ENCODE measurements at regions of chr10 and their contacts with region 1.

Region 1: DNA sequence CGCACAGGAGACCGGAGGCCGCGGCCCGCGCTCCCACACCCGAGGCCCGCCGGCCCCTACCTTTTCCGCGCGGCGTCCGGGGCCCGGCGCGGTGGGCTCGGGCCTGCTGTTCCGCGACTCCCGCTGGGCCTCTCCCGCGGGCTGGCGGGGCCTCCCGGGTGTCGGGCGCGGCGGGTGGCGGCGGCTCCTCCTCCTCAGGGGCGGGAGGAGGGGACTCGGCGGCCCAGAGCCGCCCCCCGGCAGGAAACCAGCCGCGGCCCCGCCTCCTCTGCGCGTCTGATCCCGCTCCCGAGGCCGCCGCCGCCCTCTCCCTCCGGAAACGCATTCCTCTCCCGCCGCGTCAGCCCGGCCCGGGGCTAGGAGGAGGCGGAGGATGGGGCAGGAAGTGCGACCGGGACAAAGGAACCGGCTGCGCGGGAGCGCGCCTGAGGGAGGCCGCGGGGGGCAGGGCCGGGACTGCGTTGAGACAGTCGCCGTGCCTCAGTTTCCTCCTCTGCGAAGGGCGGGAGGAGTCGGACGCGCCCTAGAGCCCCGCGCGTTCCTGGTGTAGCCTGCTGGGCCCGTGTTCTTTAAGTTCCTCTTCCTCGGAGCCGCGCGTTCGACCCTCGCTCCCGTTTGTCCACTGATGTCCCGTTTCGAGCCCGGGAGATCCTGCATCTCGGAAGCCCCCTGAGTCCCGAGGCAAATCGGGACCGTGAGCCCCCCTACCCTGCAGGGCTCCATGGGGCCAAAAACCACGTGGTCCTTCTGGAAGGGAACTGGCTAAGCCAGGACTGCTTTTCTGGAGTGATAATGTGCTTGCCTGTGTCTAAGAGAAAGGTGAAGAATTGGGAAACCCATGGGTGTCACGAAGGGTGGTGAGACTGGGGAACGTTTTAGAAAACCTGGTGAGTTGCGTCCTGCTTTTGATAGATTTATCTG is at the start of gene ITGB1:
- DNase-seq: peak; percentile 65 to 91 (median 82)
- ATAC-seq: peak; percentile 93
- H3K4me3 ChIP-seq: peak within 1 kb of the TSS; percentile 82 to 91
- H3K4me3 Mint-ChIP-seq: peak within 1 kb of the TSS; percentile 87
- H3K27ac ChIP-seq: peak within 1 kb of the TSS; percentile 49 to 77
- H3K27ac Mint-ChIP-seq: peak within 1 kb of the TSS; percentile 74
- H3K4me1 ChIP-seq: peaks cover 27% of the 10 kb centered on the region
- H3K4me1 Mint-ChIP-seq: peaks cover 54% of the 10 kb centered on the region
- H3K27me3 ChIP-seq: no peaks in the 10 kb centered on the region
- H3K27me3 Mint-ChIP-seq: no peaks in the 10 kb centered on the region
- CTCF ChIP-seq: no peak
- total RNA-seq, gene ITGB1: 34.2 to 34.5 TPM

Region 2: GRCh38 chr10:31759799-31760626 is 1198.3 kb before region 1 on chr10:
- CTCF ChIA-PET with region 1: no interaction called
- POLR2A ChIA-PET with region 1: no interaction called
- intact Hi-C with region 1: loop called (anchors 5 to 10 kb)
- DNase-seq: peak; percentile 90 to 98 (median 94)
- ATAC-seq: peak; percentile 93
- H3K4me3 ChIP-seq: peak overlapping the region; percentile 98 to 99
- H3K4me3 Mint-ChIP-seq: peak overlapping the region; percentile 88
- H3K27ac ChIP-seq: peak overlapping the region; percentile 92 to 95
- H3K27ac Mint-ChIP-seq: peak overlapping the region; percentile 97
- H3K4me1 ChIP-seq: peaks cover 8% of the 10 kb centered on the region
- H3K4me1 Mint-ChIP-seq: peaks cover 14% of the 10 kb centered on the region
- H3K27me3 ChIP-seq: no peaks in the 10 kb centered on the region
- H3K27me3 Mint-ChIP-seq: no peaks in the 10 kb centered on the region
- CTCF ChIP-seq: no peak

Region 3: DNA sequence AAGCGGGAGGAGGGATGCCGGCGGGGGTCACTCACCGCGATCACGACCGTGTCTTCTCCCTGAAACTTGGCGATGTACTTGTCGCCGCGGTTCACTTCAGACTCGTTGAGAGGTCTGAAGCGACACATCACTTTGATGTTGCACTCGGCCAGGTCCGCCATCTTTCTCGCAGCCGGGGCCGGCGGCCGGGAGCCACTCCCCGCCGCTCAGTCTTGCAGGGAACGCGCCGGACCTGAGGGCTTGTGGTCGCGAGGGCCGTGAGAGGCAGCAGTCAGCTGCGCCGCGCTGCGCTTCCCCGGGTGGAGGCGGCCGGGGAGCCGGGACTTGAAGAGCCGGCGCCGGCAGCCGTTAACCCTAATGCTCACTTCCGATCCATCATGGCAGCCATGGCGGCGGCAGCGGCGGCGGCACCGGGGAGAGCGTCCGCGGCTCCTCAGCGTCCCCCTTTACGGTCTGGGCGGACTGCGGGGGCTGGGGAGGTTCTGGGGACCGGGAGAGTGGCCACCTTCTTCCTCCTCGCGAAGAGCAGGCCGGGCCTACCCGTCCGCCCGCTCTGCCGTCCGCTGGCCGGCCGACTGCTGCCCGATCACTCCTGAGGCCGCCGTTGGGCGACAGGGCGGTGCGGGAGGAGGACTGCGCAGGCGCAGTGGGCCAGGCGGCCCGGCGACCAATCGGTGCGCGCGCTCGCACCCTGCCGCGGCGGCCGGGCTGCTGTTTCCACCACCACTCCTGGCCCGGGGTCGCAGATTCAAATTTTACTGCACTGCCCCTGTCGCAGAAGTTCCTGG is 902.3 kb before region 1 on chr10 and contains the start of gene KIF5B:
- CTCF ChIA-PET with region 1: no interaction called
- POLR2A ChIA-PET with region 1: no interaction called
- intact Hi-C with region 1: loop called in 1 of 2 experiments (anchors 10 kb)
- DNase-seq: peak; percentile 69 to 93 (median 84)
- ATAC-seq: peak; percentile 79
- H3K4me3 ChIP-seq: peak within 1 kb of the TSS; percentile 74 to 89
- H3K4me3 Mint-ChIP-seq: peak within 1 kb of the TSS; percentile 96
- H3K27ac ChIP-seq: peak within 1 kb of the TSS; percentile 66 to 89
- H3K27ac Mint-ChIP-seq: peak within 1 kb of the TSS; percentile 94
- H3K4me1 ChIP-seq: peaks cover 41% of the 10 kb centered on the region
- H3K4me1 Mint-ChIP-seq: peaks cover 51% of the 10 kb centered on the region
- H3K27me3 ChIP-seq: no peaks in the 10 kb centered on the region
- H3K27me3 Mint-ChIP-seq: no peaks in the 10 kb centered on the region
- CTCF ChIP-seq: no peak
- total RNA-seq, gene KIF5B: 53.2 to 53.8 TPM

Region 4: GRCh38 chr10:32068569-32068968 is 889.8 kb before region 1 on chr10:
- CTCF ChIA-PET with region 1: no interaction called
- POLR2A ChIA-PET with region 1: no interaction called
- intact Hi-C with region 1: no loop called
- DNase-seq: no peak
- ATAC-seq: no peak
- H3K4me3 ChIP-seq: no peak overlapping the region
- H3K4me3 Mint-ChIP-seq: no peak overlapping the region
- H3K27ac ChIP-seq: no peak overlapping the region
- H3K27ac Mint-ChIP-seq: no peak overlapping the region
- H3K4me1 ChIP-seq: no peaks in the 10 kb centered on the region
- H3K4me1 Mint-ChIP-seq: no peaks in the 10 kb centered on the region
- H3K27me3 ChIP-seq: no peaks in the 10 kb centered on the region
- H3K27me3 Mint-ChIP-seq: no peaks in the 10 kb centered on the region
- CTCF ChIP-seq: no peak

Region 5: DNA sequence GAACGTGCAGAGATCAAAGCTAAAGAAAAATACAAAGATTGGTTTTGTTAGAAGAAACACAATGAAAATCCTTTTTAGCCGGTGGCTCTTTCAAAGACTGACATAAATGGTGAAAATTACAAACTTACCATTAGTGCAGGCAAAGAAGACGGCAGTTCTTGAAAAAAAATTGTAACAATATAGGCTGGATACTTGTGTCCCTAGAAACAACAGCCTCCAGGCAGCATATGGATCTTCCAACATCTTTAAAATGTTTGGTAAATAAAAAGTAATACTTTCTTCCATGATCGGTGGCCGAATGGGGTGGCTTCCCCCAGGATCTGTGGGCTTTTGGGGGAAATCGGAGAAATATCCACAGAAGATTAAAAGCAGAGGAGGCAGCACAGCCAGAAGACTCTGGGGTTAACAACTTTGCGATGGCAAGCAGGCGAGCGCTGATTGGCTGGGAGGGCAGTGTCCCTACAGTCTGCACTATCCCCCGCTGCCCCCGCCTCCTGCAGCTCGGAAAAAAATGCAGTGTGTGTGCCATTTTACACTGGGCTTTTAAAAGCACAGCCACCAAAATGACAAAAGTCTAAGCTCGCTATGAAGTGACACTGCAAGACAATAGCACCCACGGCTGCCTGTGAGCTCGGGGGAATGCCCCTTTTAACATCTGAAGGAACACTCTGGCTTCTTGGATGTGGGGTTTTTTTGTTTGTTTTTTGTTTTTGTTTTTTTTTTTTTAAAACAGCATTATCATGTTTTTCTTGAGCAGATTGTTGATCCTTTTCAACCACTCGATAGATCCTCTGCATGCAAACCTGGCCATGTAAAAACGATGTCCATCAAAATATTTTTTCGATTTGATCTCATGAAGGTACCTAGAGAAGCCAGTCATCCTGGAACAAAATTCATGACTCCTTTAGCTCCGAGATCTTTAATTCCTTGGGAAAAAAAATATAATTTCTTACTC is 579.7 kb before region 1 on chr10:
- CTCF ChIA-PET with region 1: no interaction called
- POLR2A ChIA-PET with region 1: interaction called, 4 read pairs
- intact Hi-C with region 1: loop called (anchors 2 to 10 kb)
- DNase-seq: peak; percentile 86 to 96 (median 93)
- ATAC-seq: peak; percentile 88
- H3K4me3 ChIP-seq: peak overlapping the region; percentile 72 to 84
- H3K4me3 Mint-ChIP-seq: no peak overlapping the region
- H3K27ac ChIP-seq: peak overlapping the region; percentile 68 to 72
- H3K27ac Mint-ChIP-seq: no peak overlapping the region
- H3K4me1 ChIP-seq: peaks cover 19% of the 10 kb centered on the region
- H3K4me1 Mint-ChIP-seq: peaks cover 26% of the 10 kb centered on the region
- H3K27me3 ChIP-seq: no peaks in the 10 kb centered on the region
- H3K27me3 Mint-ChIP-seq: no peaks in the 10 kb centered on the region
- CTCF ChIP-seq: no peak

Region 6: GRCh38 chr10:32923849-32924248 is 34.5 kb before region 1 on chr10:
- CTCF ChIA-PET with region 1: no interaction called
- POLR2A ChIA-PET with region 1: no interaction called
- intact Hi-C with region 1: loop called in 1 of 2 experiments (anchors 5 kb)
- DNase-seq: no peak
- ATAC-seq: no peak
- H3K4me3 ChIP-seq: no peak overlapping the region
- H3K4me3 Mint-ChIP-seq: no peak overlapping the region
- H3K27ac ChIP-seq: no peak overlapping the region
- H3K27ac Mint-ChIP-seq: no peak overlapping the region
- H3K4me1 ChIP-seq: no peaks in the 10 kb centered on the region
- H3K4me1 Mint-ChIP-seq: peaks cover 9% of the 10 kb centered on the region
- H3K27me3 ChIP-seq: no peaks in the 10 kb centered on the region
- H3K27me3 Mint-ChIP-seq: no peaks in the 10 kb centered on the region
- CTCF ChIP-seq: no peak

Region 7: GRCh38 chr10:33008499-33009243 is 50.3 kb after region 1 on chr10:
- CTCF ChIA-PET with region 1: interaction called, 7 read pairs
- POLR2A ChIA-PET with region 1: no interaction called
- intact Hi-C with region 1: loop called in 1 of 2 experiments (anchors 2 kb)
- DNase-seq: peak in 8 of 9 experiments; percentile 44 to 82 (median 65)
- ATAC-seq: peak; percentile 59
- H3K4me3 ChIP-seq: peak overlapping the region; percentile 34 to 36
- H3K4me3 Mint-ChIP-seq: peak overlapping the region; percentile 68
- H3K27ac ChIP-seq: peak overlapping the region in 1 of 2 experiments; percentile 47
- H3K27ac Mint-ChIP-seq: peak overlapping the region; percentile 49
- H3K4me1 ChIP-seq: peaks cover 9% of the 10 kb centered on the region
- H3K4me1 Mint-ChIP-seq: peaks cover 35% of the 10 kb centered on the region
- H3K27me3 ChIP-seq: no peaks in the 10 kb centered on the region
- H3K27me3 Mint-ChIP-seq: peaks cover 12% of the 10 kb centered on the region
- CTCF ChIP-seq: peak; percentile 100

Region 8: GRCh38 chr10:33143160-33143728 is 184.9 kb after region 1 on chr10:
- CTCF ChIA-PET with region 1: no interaction called
- POLR2A ChIA-PET with region 1: interaction called, 3 read pairs
- intact Hi-C with region 1: loop called (anchors 1 to 5 kb)
- DNase-seq: peak in 6 of 9 experiments; percentile 21 to 65 (median 42)
- ATAC-seq: peak; percentile 9
- H3K4me3 ChIP-seq: no peak overlapping the region
- H3K4me3 Mint-ChIP-seq: no peak overlapping the region
- H3K27ac ChIP-seq: no peak overlapping the region
- H3K27ac Mint-ChIP-seq: peak overlapping the region; percentile 55
- H3K4me1 ChIP-seq: peaks cover 33% of the 10 kb centered on the region
- H3K4me1 Mint-ChIP-seq: peaks cover 49% of the 10 kb centered on the region
- H3K27me3 ChIP-seq: no peaks in the 10 kb centered on the region
- H3K27me3 Mint-ChIP-seq: no peaks in the 10 kb centered on the region
- CTCF ChIP-seq: no peak

Measured in CD8-positive, alpha-beta T cell (primary cell).